ENCODE measurements at regions of chr2 and their contacts with region 1.

Region 1: DNA sequence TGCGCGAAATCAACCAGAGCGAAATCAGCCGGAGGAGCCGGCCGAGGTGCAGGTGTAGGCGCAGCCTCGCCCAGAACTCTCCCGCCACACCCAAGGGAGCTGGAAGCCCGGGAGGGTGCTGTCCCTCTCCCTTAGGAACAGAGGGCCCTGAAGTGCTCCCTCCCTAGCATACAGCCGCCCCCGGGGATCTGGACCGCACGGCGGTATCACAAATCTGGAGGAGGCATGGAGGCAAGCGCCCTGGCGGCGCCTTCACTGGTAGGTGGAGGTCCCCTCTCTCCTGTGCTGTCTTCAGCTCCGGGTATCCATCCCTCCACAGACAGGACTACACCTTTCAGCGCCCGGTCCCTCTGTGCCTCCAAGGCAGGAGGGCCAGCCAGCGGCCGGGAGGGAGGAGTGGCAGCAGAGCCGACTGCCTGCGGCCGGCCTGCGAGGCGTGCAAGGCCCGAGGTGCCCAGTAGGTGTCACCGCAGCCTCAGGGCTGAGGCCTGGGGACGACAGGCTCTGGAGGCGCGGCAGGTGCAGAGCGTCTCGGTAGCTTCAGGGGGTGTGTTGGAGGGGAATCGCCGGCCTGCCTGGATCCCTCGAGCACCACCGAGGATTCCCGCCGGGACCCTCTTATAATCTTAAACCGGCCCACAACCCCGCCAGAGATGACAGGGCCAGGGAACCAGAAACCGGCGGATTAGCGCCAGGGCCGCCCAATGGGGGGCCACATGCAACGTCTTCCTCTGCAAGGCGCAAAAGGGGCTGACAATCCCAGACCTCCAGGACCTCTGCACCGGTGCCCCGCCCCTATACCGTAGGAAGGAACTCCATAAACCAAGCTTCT is 2.8 kb downstream of the IHH start:
- DNase-seq: peak; percentile 69 to 78 (median 74)
- ATAC-seq: peak; percentile 98
- H3K4me3 ChIP-seq: no peak overlapping the region
- H3K27ac ChIP-seq: no peak overlapping the region
- H3K4me1 ChIP-seq: peaks cover 0 to 25% of the 10 kb centered on the region in 2 experiments; a peak in 2 of 5 replicates
- H3K27me3 ChIP-seq: peaks cover 14 to 57% of the 10 kb centered on the region in 2 experiments; a peak in 4 of 5 replicates
- CTCF ChIP-seq: peak; percentile 75 to 89 (median 78)
- EP300 ChIP-seq: no peak
- POLR2A ChIP-seq: no peak
- RAD21 ChIP-seq: peak; percentile 81 to 86

Region 2: DNA sequence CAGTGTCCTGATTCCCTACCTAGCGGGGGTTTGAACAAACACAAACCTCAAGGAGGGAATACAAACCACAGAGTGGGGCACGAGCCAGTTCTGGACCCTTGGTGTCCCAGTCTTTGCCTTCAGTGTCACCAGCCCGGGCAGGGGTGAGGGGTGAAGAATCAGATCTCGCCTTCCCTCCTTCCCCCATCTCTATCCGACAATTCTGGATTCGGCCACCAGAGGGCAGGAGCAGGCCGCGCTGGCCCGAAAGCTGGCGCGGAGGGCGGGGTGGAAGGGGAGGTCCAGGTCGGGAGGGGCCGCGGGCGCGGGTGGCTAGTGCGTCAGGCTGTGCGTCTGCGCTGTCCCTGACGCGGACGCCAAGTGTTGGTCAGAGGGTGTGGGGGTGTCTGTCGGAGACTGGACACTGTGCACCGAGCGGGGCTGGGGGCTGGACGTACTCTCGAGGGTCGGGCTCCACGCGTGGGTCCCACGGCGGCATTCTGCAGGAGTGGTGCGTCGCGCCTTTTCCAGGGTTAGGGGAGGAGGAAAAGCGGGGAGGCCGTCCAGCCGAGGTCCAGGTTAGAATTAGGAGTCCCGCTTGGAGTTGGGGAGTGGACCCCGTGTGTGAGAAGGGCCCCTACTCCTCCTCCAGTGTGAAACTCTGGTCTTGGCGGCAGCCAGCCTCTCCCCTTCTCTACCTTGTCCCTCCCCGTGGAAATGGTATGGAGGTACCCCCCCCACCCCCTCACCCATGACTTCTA is 61.8 kb before region 1 on chr2:
- CTCF ChIA-PET with region 1: interaction called, 3 read pairs
- POLR2A ChIA-PET with region 1: no interaction called
- in situ Hi-C with region 1: no loop called
- intact Hi-C with region 1: loop called (anchors 5 kb)
- DNase-seq: peak; percentile 89 to 92 (median 91)
- ATAC-seq: peak; percentile 97
- H3K4me3 ChIP-seq: peak overlapping the region; percentile 51
- H3K27ac ChIP-seq: peak overlapping the region; percentile 33; the same call in 2 of the 3 replicates
- H3K4me1 ChIP-seq: peaks cover 12 to 33% of the 10 kb centered on the region in 2 experiments; a peak in 4 of 5 replicates
- H3K27me3 ChIP-seq: peaks cover 0 to 36% of the 10 kb centered on the region in 2 experiments; a peak in 3 of 5 replicates
- CTCF ChIP-seq: peak; percentile 81 to 89 (median 84)
- EP300 ChIP-seq: no peak
- POLR2A ChIP-seq: peak; percentile 64
- RAD21 ChIP-seq: peak; percentile 62 to 71

Region 3: GRCh38 chr2:219726916-219727315 is 669.0 kb after region 1 on chr2:
- CTCF ChIA-PET with region 1: no interaction called
- POLR2A ChIA-PET with region 1: no interaction called
- in situ Hi-C with region 1: no loop called
- intact Hi-C with region 1: no loop called
- DNase-seq: peak in 2 of 4 experiments; percentile 24 to 37
- ATAC-seq: peak; percentile 63
- H3K4me3 ChIP-seq: no peak overlapping the region
- H3K27ac ChIP-seq: no peak overlapping the region
- H3K4me1 ChIP-seq: peaks cover 0 to 24% of the 10 kb centered on the region in 2 experiments; a peak in 3 of 5 replicates
- H3K27me3 ChIP-seq: no peaks in the 10 kb centered on the region; a peak in 1 of 5 replicates
- CTCF ChIP-seq: peak; percentile 33 to 47 (median 42); a peak in 5 of 6 replicates
- EP300 ChIP-seq: no peak
- POLR2A ChIP-seq: no peak
- RAD21 ChIP-seq: peak in 1 of 2 experiments; percentile 40; a peak in 2 of 4 replicates

Measured in K562 (cell line).